Dendritic cell treated with granulocyte-macrophage colony-stimulating factor and Interleukin-4, amounts not matched to agents 40 ng/mL and 50 ng/mL, for 4 days (primary cell): ENCODE measurements at regions of chr1 and their contacts with region 1.

Region 1: DNA sequence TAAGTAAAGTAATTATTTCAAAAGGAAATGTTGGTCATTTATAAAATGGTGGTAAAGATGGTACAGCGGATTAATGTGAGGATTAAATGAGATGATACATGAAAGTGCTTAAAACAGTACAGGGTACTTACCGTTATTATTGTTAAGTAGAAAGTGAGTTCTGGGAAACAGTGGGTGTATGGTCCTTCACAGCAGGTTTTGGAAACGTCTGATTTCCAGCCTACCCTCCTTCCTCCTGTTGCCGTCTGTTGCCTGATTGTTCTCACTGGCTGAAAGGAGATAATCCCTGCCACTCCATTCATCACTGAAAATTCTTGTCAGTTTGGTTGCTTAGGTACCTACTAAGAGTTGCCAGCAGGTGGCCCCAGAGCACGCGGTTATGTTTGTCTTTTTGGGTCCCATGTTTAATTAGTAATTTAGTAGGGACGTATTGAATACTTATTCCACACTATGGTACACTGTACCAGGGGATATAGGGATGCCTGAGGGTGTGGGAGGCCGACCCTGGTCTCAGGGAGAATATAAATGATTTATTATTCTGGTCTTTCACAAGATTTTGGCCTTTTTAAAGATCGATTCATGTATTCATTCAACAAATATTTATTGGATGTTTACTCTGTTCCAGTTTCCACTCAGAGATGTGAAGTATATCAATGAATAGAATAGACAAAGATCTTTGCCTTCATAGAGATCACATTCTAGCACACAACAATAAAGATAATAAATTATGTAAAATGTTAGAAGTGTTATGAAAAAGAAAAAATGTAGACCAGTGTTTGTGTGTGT is 30.8 kb upstream of the RPTN start:
- H3K4me3 Mint-ChIP-seq: no peak overlapping the region
- H3K27ac Mint-ChIP-seq: no peak overlapping the region
- H3K4me1 Mint-ChIP-seq: peaks cover 7% of the 10 kb centered on the region
- H3K27me3 Mint-ChIP-seq: peaks cover 29% of the 10 kb centered on the region

Region 2: DNA sequence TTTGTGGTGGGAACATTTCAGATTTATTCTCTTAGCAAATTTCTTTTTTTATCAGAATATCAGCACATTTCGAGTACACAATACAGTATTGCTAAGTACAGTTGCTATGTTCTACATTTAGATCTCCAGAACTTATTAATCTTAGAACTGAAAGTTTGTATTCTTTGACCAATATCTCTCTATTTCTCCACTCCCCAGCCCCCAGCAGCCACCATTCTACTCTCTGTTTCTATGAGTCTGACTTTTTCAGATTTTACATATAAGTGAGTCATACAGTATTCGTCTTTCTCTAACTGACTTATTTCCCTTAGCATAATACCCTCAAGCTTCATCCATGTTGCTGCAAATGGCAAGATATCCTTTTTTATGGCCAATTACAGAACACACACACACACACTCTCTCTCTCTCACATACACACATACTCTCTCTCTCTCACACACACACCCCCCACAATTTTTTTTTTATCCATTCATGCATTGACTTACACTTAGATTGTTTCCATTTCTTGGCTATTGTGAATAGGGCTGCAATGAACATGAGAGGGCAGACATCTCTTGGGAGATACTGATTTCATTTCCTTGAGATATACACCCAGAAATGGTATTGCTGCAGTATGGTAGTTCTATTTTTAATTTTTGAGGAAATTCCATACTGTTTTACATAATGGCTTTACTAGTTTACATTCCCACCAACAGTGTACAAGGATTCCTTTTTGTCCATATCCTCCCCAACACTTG is 46.5 kb before region 1 on chr1:
- intact Hi-C with region 1: no loop called
- H3K4me3 Mint-ChIP-seq: no peak overlapping the region
- H3K27ac Mint-ChIP-seq: no peak overlapping the region
- H3K4me1 Mint-ChIP-seq: peaks cover 19% of the 10 kb centered on the region
- H3K27me3 Mint-ChIP-seq: peaks cover 25% of the 10 kb centered on the region

Region 3: GRCh38 chr1:152347116-152347728 is 157.4 kb after region 1 on chr1:
- intact Hi-C with region 1: loop called (anchors 1 kb)
- H3K4me3 Mint-ChIP-seq: no peak overlapping the region
- H3K27ac Mint-ChIP-seq: no peak overlapping the region
- H3K4me1 Mint-ChIP-seq: no peaks in the 10 kb centered on the region
- H3K27me3 Mint-ChIP-seq: peaks cover 16% of the 10 kb centered on the region

Region 4: DNA sequence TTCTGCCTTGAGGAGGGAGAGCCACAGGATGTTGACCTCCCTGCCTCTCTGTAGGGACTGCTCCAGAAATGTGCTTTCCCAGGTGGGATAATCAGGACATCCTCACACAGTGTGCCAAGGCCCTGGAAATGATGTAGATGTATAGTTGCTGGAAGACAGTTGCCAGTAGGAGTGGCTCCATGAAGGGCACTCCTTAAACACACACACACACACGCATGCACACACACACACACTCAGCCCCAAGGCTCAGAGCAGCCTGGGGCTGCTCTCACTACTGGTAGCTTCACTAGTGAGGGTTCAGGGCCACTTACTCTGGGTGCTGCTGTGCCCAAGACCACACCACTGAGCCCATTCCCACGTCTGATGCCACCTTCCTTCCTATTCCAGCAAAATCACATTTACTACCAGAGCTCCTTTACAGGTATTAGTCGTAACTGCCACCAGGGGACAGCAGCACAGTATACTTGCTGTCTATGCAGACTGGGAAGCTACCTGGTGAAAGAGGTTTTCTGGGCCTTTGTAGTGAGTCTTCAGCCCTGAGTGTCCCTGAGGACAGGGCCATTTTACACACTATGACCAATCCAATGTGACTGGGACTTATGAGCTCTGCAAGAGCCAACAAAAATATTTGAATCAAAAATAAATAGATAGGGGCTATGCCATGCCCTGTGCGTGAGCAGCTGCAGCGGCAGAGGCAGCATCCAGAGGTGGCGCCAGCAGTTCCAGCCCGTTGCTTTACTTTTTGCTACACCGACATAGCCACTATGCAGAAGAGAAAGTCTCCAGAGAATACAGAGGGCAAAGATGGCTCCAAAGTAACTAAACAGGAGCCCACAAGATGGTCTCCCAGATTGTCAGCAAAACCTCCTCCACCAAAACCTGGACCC is 209.2 kb after region 1 on chr1:
- intact Hi-C with region 1: no loop called
- H3K4me3 Mint-ChIP-seq: no peak overlapping the region
- H3K27ac Mint-ChIP-seq: no peak overlapping the region
- H3K4me1 Mint-ChIP-seq: no peaks in the 10 kb centered on the region
- H3K27me3 Mint-ChIP-seq: peaks cover 10% of the 10 kb centered on the region

Region 5: DNA sequence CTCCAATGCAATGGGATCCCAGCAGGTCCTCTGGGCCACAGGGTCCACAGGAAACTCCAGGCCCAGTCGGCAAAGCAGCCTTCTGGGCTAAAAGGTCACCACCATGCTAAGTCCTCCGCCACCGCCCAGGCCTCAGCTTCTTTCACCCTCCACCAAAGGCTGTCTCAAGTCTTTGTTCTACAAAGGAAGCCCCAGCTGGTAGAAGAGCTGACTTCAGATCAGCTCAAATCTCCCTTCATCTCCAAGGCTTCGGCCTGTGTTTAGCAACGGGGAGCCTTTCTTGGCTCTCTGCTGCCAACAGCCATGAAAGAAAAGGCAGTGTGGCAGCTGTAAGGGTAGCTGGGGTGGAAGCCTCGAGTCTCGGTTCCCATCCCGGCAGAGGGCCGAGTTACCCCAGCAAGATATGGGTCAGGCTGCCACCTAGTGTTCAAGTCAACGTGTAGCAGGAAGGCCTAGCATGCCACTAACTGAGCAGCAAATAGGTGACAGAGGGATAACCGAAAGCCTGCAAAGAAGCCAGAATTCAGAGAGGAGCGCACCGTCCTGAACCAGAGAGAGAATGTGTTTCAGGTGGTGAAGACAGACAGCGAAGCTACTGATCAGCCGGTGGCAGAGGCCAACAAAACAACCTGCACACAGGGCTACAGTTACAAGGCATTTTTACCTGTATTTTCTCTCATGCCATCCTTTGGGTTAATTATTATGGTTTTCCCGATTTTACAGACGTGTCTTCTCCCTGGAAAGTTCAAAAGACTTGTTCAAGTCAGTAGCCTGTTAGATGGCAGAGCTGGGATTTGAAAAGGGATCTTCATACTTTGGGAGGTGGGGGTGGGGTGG is 251.0 kb after region 1 on chr1:
- intact Hi-C with region 1: loop called (anchors 5 kb)
- H3K4me3 Mint-ChIP-seq: no peak overlapping the region
- H3K27ac Mint-ChIP-seq: no peak overlapping the region
- H3K4me1 Mint-ChIP-seq: peaks cover 9% of the 10 kb centered on the region
- H3K27me3 Mint-ChIP-seq: peaks cover 15% of the 10 kb centered on the region

Region 6: DNA sequence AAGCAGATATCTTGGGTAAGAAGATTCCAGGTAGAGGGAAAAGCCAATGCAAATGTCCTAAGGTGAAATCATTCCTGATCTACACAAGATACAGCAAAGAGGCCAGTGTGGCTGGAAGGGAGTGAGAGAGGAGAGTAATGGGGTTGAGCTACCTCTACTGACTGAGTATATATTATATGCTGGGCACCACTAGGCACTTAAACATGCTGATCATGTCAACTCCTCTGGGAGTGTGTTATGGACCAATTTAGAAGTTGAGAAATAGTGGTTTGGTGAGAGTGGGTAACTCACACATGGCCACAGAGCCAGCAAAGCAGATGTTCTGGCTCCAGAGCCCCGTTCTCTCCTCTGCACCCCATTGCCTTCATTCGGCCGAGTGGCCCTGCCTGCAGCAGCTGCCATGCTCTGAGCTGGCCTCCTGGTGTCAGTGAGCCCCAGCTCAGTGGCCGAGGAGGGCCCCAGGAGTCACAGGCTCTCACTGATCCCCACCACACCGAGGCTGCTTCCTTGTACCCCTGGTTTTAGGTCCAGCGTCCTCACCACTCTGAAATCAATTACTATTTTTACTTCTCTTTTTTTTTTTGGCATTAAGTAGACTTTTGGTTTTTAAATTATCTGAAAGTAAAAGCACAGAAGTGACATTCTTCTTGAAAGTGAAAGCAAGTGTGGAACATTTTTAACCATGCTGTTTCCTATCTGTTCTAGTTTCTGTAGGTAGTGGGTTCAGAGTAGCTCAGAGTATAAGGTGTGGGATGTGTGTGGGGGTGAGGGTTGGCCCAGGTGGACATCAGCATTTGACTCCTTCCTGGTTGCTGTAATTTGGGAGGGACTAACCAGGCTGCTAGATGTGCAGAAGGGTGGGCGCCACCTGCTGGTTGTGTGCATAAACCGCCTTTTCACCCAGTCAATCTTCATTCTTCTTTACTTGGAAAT is 270.0 kb after region 1 on chr1:
- intact Hi-C with region 1: loop called (anchors 1 kb)
- H3K4me3 Mint-ChIP-seq: peak overlapping the region; percentile 65
- H3K27ac Mint-ChIP-seq: peak overlapping the region; percentile 78
- H3K4me1 Mint-ChIP-seq: peaks cover 22% of the 10 kb centered on the region
- H3K27me3 Mint-ChIP-seq: peaks cover 18% of the 10 kb centered on the region